Left colon (tissue), 2 donors: ENCODE measurements at regions of chr11 and their contacts with region 1.

Region 1: GRCh38 chr11:32960553-32961164 is 55.0 kb upstream of the DEPDC7 start:
- DNase-seq: no peak
- ATAC-seq: peak; percentile 50

Region 2: DNA sequence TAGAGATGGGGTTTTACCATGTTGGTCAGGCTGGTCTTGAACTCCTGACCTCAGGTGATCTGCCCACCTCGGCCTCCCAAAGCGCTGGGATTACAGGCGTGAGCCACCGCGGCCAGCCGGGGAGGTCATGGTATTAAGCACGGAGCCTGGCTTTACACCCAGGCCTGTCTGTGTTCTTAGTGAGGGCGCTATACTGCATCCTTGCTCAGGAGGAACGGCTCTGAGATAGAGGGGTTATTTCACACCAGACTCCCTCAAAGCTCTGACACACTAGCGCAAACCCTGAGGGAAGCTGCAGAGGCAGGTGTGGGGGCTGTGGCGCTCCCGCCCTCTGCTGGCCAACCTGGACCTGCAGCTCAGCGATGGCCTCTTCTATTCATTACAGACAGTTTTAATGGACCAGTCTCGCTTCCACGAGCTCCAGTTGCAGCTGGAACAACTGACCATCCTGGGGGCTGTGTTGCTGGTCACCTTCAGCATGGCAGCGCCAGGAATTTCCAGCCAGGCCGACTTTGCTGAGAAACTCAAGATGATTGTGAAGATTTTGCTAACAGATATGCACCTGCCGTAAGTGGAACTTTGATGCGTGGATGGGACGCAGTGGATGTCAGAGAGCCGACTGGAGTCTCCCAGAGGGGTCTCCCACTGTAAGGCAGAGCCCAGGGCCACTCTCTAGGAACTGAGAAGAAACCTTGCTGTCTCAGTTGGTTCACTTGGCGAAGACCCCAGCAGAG is 105.0 kb after region 1 on chr11:
- intact Hi-C with region 1: loop called (anchors 2 to 5 kb)
- DNase-seq: peak; percentile 58 to 80
- ATAC-seq: peak; percentile 57